ENCODE measurements at regions of chr17 and their contacts with region 1.

Region 1: GRCh38 chr17:42312285-42313130 is 24.2 kb downstream of the STAT5A start:
- DNase-seq: peak; percentile 45 to 89 (median 79)
- ATAC-seq: peak; percentile 61
- H3K4me3 ChIP-seq: peak overlapping the region; percentile 20 to 38
- H3K4me3 Mint-ChIP-seq: peak overlapping the region; percentile 74
- H3K27ac ChIP-seq: peak overlapping the region; percentile 31 to 66
- H3K27ac Mint-ChIP-seq: peak overlapping the region; percentile 86
- H3K4me1 ChIP-seq: peaks cover 69% of the 10 kb centered on the region
- H3K4me1 Mint-ChIP-seq: peaks cover 72% of the 10 kb centered on the region
- H3K27me3 ChIP-seq: no peaks in the 10 kb centered on the region
- H3K27me3 Mint-ChIP-seq: no peaks in the 10 kb centered on the region
- CTCF ChIP-seq: peak; percentile 62

Region 2: DNA sequence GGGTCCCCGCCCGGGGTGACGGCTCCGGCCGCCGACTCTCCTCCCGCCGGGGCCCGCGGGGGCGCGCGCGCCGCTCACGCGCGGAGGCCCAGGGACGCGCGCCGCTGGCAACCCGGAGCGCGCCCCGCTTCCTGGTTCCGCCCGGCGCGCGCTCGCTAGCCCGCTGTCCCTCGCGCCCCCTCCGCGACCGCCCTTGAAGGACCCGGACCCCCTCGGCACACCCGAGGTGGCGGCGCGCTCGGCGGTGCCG is 36.2 kb before region 1 on chr17 and contains the start of gene STAT5B:
- CTCF ChIA-PET with region 1: interaction called, 6 read pairs
- POLR2A ChIA-PET with region 1: interaction called, 18 read pairs
- intact Hi-C with region 1: no loop called
- DNase-seq: peak; percentile 30 to 89 (median 66)
- ATAC-seq: peak; percentile 33
- H3K4me3 ChIP-seq: peak within 1 kb of the TSS; percentile 72 to 84
- H3K4me3 Mint-ChIP-seq: peak within 1 kb of the TSS; percentile 96
- H3K27ac ChIP-seq: peak within 1 kb of the TSS; percentile 77 to 83
- H3K27ac Mint-ChIP-seq: peak within 1 kb of the TSS; percentile 98
- H3K4me1 ChIP-seq: peaks cover 48% of the 10 kb centered on the region
- H3K4me1 Mint-ChIP-seq: peaks cover 52% of the 10 kb centered on the region
- H3K27me3 ChIP-seq: no peaks in the 10 kb centered on the region
- H3K27me3 Mint-ChIP-seq: no peaks in the 10 kb centered on the region
- CTCF ChIP-seq: no peak
- total RNA-seq, gene STAT5B: 85.2 to 85.5 TPM

Region 3: GRCh38 chr17:42287926-42288802 is 24.3 kb before region 1 on chr17 and contains the start of gene STAT5A:
- CTCF ChIA-PET with region 1: interaction called, 19 read pairs
- POLR2A ChIA-PET with region 1: interaction called, 23 read pairs
- intact Hi-C with region 1: no loop called
- DNase-seq: peak; percentile 63 to 92 (median 81)
- ATAC-seq: peak; percentile 78
- H3K4me3 ChIP-seq: peak within 1 kb of the TSS; percentile 74 to 84
- H3K4me3 Mint-ChIP-seq: peak within 1 kb of the TSS; percentile 94
- H3K27ac ChIP-seq: peak within 1 kb of the TSS; percentile 87 to 94
- H3K27ac Mint-ChIP-seq: peak within 1 kb of the TSS; percentile 98
- H3K4me1 ChIP-seq: peaks cover 35% of the 10 kb centered on the region
- H3K4me1 Mint-ChIP-seq: peaks cover 50% of the 10 kb centered on the region
- H3K27me3 ChIP-seq: no peaks in the 10 kb centered on the region
- H3K27me3 Mint-ChIP-seq: no peaks in the 10 kb centered on the region
- CTCF ChIP-seq: no peak
- total RNA-seq, gene STAT5A: 300 to 319 TPM

Region 4: GRCh38 chr17:42322382-42323267 is 10.1 kb after region 1 on chr17:
- CTCF ChIA-PET with region 1: interaction called, 91 read pairs
- POLR2A ChIA-PET with region 1: interaction called, 7 read pairs
- intact Hi-C with region 1: loop called in 1 of 2 experiments (anchors 1 kb)
- DNase-seq: peak; percentile 89 to 98 (median 96)
- ATAC-seq: peak; percentile 97
- H3K4me3 ChIP-seq: no peak overlapping the region
- H3K4me3 Mint-ChIP-seq: no peak overlapping the region
- H3K27ac ChIP-seq: peak overlapping the region in 1 of 2 experiments; percentile 38
- H3K27ac Mint-ChIP-seq: peak overlapping the region; percentile 82
- H3K4me1 ChIP-seq: peaks cover 17% of the 10 kb centered on the region
- H3K4me1 Mint-ChIP-seq: peaks cover 40% of the 10 kb centered on the region
- H3K27me3 ChIP-seq: no peaks in the 10 kb centered on the region
- H3K27me3 Mint-ChIP-seq: no peaks in the 10 kb centered on the region
- CTCF ChIP-seq: peak; percentile 99

Region 5: DNA sequence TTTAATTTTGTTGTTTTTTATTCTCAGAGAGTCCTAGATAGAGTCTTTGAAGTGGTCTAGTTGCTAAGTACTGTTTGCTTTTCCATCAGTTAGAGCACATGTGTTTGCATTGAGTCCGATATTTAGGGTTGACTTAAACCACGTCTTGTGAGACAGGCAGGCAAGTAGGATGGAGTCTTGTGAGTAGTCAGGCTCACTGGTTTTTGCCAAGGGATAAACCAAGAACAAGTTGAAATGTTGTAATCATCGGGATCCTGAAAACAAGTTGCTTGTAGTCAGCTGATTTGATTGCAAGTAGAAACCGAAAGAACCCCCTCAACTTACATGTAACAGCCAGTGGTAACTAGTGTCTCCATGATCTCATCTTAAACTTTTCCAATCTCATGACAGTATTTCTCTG is 163.3 kb after region 1 on chr17:
- CTCF ChIA-PET with region 1: no interaction called
- POLR2A ChIA-PET with region 1: no interaction called
- intact Hi-C with region 1: no loop called
- DNase-seq: no peak
- ATAC-seq: no peak
- H3K4me3 ChIP-seq: no peak overlapping the region
- H3K4me3 Mint-ChIP-seq: no peak overlapping the region
- H3K27ac ChIP-seq: no peak overlapping the region
- H3K27ac Mint-ChIP-seq: no peak overlapping the region
- H3K4me1 ChIP-seq: no peaks in the 10 kb centered on the region
- H3K4me1 Mint-ChIP-seq: peaks cover 13% of the 10 kb centered on the region
- H3K27me3 ChIP-seq: no peaks in the 10 kb centered on the region
- H3K27me3 Mint-ChIP-seq: no peaks in the 10 kb centered on the region
- CTCF ChIP-seq: no peak